ENCODE measurements at regions of chr14 and their contacts with region 1.

Region 1: DNA sequence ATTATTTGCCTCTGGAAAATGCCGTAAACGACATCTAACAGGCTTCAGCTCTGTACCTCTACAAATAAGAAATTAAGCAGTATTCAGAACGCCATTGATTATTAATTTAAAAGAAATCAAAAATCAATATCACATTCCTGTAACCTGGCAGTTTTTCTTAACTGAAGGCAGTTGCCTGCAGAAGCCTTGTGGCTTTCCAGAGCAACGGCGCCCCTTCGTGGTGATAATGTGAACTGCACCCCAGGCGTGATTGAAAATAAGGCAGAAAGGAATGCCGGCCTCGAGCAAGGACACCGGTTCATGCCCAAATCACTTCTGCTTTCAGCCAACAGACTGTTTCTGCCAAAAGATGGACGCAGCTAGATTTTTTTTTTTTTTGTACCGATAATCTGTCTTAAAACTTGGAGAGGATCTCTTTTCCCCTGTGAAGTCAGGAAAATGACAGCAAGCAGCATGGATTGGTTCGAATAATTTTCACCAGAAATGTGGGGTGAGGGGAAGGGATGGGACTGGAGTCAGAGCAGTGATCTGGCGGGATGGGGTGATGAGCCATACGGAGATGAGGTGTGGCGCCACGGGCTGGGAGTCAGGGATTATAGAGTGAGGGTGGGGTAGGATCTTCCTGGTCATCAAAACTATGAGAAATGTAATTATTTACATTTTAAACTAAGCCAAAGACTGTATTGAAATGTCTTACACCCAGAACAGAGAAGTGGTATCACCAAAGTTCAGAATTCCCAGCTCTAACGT is 473.0 kb downstream of the DPF3 start:
- DNase-seq: peak; percentile 88
- ATAC-seq: peak; percentile 47
- H3K4me3 Mint-ChIP-seq: no peak overlapping the region
- H3K27ac Mint-ChIP-seq: peak overlapping the region; percentile 55
- H3K4me1 Mint-ChIP-seq: peaks cover 7% of the 10 kb centered on the region
- H3K27me3 Mint-ChIP-seq: peaks cover 36% of the 10 kb centered on the region

Region 2: DNA sequence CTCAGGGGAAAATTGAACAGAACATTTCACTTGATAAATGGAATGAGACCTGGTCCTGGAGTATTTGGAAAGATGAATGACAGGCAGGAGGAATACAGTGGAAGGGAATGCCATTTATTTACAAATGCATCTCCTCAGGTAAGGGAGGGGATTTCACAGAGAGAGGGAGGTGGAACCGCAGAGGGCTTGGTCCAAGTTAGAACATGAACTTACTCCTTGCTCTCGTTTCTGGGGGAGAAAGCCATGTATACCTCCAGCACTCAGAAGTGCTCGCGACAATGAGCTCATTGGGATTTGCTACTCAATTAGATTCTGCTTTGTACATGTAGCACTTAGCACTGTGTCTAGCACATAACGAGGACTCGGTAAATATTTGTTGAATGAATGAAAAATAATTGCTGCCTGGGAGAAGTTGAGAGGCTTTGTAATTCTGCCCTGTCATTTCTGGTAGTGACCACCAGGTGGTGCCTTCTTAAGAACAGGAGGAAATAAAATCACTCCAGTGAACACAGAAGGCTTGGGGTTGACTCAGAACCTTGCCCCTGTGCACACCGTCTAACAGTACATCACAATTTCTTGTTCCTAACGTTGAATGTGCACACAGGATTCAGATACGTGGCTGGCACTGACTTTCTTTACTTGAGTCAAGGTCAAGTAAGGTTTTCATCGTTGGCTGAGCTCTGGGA is 397.0 kb before region 1 on chr14:
- CTCF ChIA-PET with region 1: interaction called, 37 read pairs
- DNase-seq: peak; percentile 72
- ATAC-seq: peak; percentile 94
- H3K4me3 Mint-ChIP-seq: no peak overlapping the region
- H3K27ac Mint-ChIP-seq: no peak overlapping the region
- H3K4me1 Mint-ChIP-seq: peaks cover 13% of the 10 kb centered on the region
- H3K27me3 Mint-ChIP-seq: peaks cover 57% of the 10 kb centered on the region

Region 3: DNA sequence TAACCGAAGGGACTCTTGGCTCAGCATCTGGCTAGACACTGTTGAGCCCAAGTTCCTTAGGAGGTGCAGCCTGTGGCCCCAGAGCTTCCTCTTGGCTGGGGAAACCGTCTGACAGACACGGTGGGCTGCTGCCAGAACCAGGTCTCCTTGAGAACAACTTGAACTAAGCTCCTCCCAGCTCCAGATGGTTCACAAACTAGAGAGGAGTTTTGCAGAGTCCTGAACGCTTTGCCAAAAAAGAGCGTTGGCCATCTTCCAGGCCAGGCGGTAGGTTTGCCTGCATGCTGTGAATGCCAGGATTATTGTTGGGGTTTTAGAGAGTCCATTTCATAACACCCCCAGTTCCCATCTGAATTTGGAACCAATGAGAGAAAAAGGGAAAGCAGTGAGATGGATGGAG is 88.9 kb before region 1 on chr14:
- CTCF ChIA-PET with region 1: no interaction called
- DNase-seq: no peak
- ATAC-seq: no peak
- H3K4me3 Mint-ChIP-seq: no peak overlapping the region
- H3K27ac Mint-ChIP-seq: no peak overlapping the region
- H3K4me1 Mint-ChIP-seq: no peaks in the 10 kb centered on the region
- H3K27me3 Mint-ChIP-seq: peaks cover 35% of the 10 kb centered on the region

Measured in activated CD8-positive, alpha-beta memory T cell treated with anti-CD3 and anti-CD28 coated beads, Interleukin-2, amount 10 ng/mL, durations not matched to agents 7 days and 5 days (primary cell).